Sciatic nerve (tissue), 2 donors: ENCODE measurements at regions of chr2 and their contacts with region 1.

Region 1: GRCh38 chr2:234091432-234091879 is 41.0 kb downstream of the SPP2 start:
- DNase-seq: no peak
- ATAC-seq: peak; percentile 59

Region 2: GRCh38 chr2:233156001-233156400 is 935.5 kb before region 1 on chr2:
- intact Hi-C with region 1: loop called (anchors 5 kb)
- DNase-seq: no peak
- ATAC-seq: no peak

Region 3: GRCh38 chr2:235990344-235990743 is 1898.9 kb after region 1 on chr2:
- intact Hi-C with region 1: no loop called
- DNase-seq: no peak
- ATAC-seq: no peak